ENCODE measurements at regions of chr5 and their contacts with region 1.

Region 1: GRCh38 chr5:173917788-173918786 is 29.9 kb downstream of the CPEB4 start:
- DNase-seq: peak; percentile 24 to 84 (median 45)
- ATAC-seq: peak; percentile 91 to 96 (median 94)
- H3K4me3 ChIP-seq: peak overlapping the region; percentile 61 to 67
- H3K4me3 Mint-ChIP-seq: no peak overlapping the region
- H3K27ac ChIP-seq: peak overlapping the region; percentile 87
- H3K27ac Mint-ChIP-seq: no peak overlapping the region
- H3K4me1 ChIP-seq: peaks cover 4 to 5% of the 10 kb centered on the region in 2 experiments
- H3K4me1 Mint-ChIP-seq: peaks cover 10 to 21% (median 12%) of the 10 kb centered on the region in 3 donors
- H3K27me3 ChIP-seq: no peaks in the 10 kb centered on the region
- H3K27me3 Mint-ChIP-seq: no peaks in the 10 kb centered on the region

Region 2: GRCh38 chr5:173887610-173888472 is 30.2 kb before region 1 on chr5 and contains the start of gene CPEB4:
- CTCF ChIA-PET with region 1: interaction called in 1 of 2 experiments, 7 read pairs
- POLR2A ChIA-PET with region 1: interaction called in 1 of 2 experiments, 14 read pairs
- DNase-seq: peak; percentile 88 to 99 (median 96)
- ATAC-seq: peak; percentile 93 to 98 (median 97)
- H3K4me3 ChIP-seq: peak within 1 kb of the TSS; percentile 81 to 90
- H3K4me3 Mint-ChIP-seq: peak within 1 kb of the TSS; percentile 87 to 99 (median 98)
- H3K27ac ChIP-seq: peak within 1 kb of the TSS; percentile 93
- H3K27ac Mint-ChIP-seq: peak within 1 kb of the TSS; percentile 99 to 100
- H3K4me1 ChIP-seq: peaks cover 29 to 47% of the 10 kb centered on the region in 2 experiments
- H3K4me1 Mint-ChIP-seq: peaks cover 76 to 85% (median 76%) of the 10 kb centered on the region in 3 donors
- H3K27me3 ChIP-seq: no peaks in the 10 kb centered on the region
- H3K27me3 Mint-ChIP-seq: no peaks in the 10 kb centered on the region
- total RNA-seq, gene CPEB4: 13.8 to 25.9 (median 14.9) TPM

Measured in T-cell (primary cell).